ENCODE measurements at regions of chr20 and their contacts with region 1.

Region 1: DNA sequence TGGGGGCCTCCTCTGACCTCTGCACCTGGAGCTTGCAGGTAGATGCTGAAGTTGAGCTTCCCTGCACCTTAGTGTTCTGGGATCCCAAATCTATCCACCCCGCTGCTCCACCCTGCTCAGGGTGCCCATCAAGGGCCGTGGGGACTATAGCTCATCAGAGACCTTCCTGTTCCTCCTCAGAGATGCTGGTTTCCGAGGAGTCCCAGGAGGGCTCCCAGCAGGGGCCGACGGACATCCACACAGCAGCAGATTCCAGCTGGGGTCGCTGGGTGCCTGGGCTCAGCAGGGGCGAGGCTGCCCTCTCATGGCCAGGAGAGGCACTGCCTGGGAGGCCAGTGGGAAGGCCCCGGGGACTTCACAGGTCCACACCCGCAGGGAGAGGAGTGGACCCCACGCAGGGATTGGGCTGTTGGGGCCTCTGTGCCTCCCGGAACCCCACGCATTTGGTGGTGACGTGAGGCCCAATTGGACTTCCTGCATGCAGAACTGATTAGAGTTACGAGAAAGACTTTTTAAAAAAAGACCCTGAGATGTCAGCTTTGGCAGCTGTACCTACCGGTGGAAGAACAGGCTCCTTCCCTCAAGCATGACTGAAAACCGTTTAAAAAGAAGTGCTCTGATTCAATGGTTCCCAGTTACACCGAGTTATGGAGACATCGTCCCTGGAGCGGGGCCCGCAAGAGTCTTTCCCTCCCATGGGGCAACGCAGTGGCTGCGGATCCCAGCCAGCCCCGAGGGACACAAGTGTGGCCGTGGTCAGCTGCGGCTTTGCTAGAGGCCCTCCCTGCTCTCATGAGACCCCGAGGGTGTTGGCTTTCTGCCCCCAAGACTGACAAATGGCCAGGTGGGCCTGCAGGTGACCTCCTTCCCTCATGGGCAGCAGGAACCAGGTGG is 25.3 kb upstream of the SLCO4A1 start:
- DNase-seq: peak; percentile 91
- CTCF ChIP-seq: peak; percentile 98

Region 2: DNA sequence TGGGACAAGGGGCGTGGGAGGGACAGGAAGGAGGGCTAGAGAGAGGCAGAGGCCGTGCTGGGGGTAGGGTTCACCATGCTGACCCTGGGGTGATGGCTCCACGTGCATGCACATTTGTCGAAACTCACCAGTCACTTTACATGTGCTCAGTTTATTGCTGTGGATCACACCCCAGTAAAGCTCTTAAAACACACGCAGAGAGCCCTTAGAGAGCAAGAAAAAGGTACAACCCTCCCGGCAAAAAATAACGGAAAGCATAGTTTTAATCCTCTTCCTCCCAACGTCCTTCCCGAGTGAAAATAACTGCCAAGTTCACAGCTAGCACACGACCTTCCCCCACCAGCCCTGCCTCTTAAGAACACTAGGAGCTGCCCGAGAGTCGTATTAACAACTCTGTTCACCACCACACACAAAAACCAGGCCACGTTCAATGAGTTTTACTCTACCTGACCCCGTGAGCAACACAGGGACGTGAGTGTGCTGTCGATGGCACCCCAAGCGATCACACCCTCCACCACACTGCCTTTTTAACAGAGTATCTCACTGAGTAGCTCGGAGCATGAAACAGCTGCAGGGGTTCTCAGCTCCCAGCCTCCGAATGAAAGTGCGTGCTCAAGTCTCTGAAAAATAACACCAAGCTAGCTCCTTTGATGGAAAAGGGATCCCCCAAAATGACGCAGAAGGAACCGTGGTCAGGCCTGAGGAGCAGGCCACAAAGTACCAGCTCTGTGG is 591.0 kb before region 1 on chr20:
- in situ Hi-C with region 1: no loop called
- DNase-seq: no peak
- CTCF ChIP-seq: peak; percentile 10

Region 3: DNA sequence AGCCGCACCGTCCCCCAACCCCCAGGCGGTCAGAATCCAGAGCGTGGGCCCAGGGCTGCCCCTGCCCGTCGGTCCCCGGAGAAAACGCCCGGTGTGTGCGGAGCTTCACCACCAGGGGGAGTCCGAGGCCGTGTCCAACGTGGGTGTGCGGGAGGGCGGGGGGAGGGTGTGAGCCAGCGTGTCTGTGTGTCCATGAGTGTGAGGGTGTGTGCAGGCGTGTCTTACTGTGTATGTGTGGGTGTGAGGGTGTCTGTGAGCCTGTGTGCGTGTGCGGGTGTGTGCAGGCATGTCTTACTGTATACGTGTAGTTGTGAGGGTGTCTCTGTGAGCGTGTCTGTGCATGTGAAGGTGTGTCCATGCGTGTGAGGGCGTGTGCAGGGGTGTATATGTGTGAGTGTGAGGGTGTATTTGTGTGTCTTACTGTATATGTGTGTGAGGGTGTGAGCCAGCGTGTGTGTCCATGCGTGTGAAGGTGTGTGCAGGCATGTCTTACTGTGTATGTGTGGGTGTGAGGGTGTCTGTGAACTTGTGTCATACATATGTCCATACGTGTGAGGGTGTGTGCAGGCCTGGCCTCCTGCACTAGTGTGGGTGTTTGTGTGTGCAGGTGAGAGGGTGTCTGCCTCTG is 116.6 kb before region 1 on chr20:
- in situ Hi-C with region 1: loop called (anchors 10 kb)
- DNase-seq: peak; percentile 87
- CTCF ChIP-seq: peak; percentile 91

Measured in GM13976 (cell line).